Activated CD8-positive, alpha-beta T cell treated with anti-CD3 and anti-CD28 coated beads, Interleukin-2, amount 10 ng/mL, durations not matched to agents 7 days and 5 days (primary cell): ENCODE measurements at regions of chr1 and their contacts with region 1.

Region 1: GRCh38 chr1:206583707-206584648 is 28.3 kb downstream of the EIF2D start:
- DNase-seq: peak; percentile 90
- ATAC-seq: peak; percentile 18
- H3K4me3 Mint-ChIP-seq: peak overlapping the region; percentile 54
- H3K27ac Mint-ChIP-seq: peak overlapping the region; percentile 91
- H3K4me1 Mint-ChIP-seq: peaks cover 92% of the 10 kb centered on the region
- H3K27me3 Mint-ChIP-seq: no peaks in the 10 kb centered on the region

Region 2: DNA sequence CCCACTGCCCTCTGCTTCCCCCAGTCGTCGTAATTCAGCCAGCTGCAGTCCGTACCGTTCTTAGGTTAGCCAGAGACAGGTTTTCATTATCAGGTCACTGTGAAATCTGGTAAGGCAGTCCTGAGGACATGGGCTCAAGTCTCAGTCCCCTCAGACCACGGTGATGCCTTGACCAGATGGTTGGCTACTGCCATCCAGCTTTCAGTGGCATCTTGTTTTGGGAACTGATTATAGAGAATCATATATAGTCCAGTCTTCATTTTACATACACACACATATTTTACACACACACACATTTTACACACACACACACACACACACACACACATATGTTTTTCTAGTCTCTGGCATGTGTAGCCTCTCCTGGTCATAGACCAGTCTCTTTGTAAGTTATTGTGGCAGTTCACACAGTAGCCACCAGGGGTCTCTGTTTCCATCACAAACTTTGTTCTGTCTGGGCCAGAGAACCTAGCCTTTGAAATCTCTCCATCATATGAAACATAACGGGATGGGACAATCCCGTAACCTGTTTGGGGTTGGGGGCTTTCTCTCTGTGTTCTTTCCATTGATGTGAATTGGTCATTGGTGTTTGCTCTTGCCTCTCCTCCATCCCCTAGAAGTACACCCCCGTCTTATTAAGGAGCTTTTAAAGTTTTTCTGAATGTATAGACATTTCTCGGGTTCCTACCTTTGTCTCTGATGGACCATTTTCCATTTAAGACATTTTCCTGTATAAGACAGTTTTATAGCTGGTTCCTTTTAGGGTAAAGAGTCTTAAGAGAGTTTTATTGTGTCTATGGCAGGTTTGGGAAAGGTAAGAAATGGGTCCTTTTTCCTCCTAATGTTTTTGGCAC is 122.1 kb before region 1 on chr1:
- CTCF ChIA-PET with region 1: interaction called, 14 read pairs
- POLR2A ChIA-PET with region 1: no interaction called
- DNase-seq: peak; percentile 88
- ATAC-seq: peak; percentile 73
- H3K4me3 Mint-ChIP-seq: no peak overlapping the region
- H3K27ac Mint-ChIP-seq: no peak overlapping the region
- H3K4me1 Mint-ChIP-seq: peaks cover 43% of the 10 kb centered on the region
- H3K27me3 Mint-ChIP-seq: no peaks in the 10 kb centered on the region

Region 3: DNA sequence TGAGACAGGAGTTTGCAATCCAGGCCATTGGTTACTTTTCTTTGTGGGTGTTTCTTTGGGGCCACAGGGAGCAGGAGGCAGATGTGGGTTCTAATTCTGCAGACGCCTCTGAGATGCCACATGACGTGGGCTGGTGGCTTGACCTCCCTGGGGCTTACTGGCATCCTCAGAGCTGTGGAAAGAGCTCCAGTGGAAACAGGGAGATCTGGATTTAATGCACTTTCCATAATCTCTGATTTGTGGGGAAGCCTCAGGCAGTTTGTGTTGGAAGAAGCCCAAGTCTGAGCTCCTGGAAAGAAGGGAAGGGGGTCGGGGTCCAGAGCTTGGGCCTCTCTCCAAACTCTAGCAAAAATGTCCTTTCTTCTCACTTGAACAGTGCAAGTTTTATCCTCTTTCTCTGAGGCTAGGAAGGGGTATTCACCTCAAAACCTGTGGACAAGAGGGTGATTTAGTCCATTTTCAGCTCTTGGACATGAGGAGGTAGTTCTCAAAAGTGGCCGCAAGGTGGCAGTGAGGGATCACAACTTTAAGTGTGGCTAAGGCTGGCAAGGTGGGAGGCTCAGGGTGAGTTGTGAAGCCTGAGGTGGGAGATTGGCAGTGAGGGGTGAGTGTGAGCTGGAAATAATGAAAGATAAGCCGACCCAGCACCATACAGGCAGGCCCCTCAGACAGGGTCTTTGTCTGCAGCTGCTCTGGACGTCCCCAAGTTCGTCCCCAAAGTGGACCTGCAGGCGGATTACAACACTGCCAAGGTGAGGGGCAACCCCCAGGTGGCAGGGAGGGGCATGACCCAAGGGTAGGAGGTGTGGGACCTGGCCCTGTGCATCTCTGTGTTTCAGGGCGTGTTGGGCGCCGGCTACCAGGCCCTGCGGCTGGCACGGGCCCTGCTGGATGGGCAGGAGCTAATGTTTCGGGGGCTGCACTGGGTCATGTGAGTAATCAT is 104.5 kb before region 1 on chr1:
- CTCF ChIA-PET with region 1: interaction called, 16 read pairs
- POLR2A ChIA-PET with region 1: no interaction called
- DNase-seq: peak; percentile 80
- ATAC-seq: peak; percentile 73
- H3K4me3 Mint-ChIP-seq: no peak overlapping the region
- H3K27ac Mint-ChIP-seq: peak overlapping the region; percentile 55
- H3K4me1 Mint-ChIP-seq: peaks cover 18% of the 10 kb centered on the region
- H3K27me3 Mint-ChIP-seq: no peaks in the 10 kb centered on the region

Region 4: DNA sequence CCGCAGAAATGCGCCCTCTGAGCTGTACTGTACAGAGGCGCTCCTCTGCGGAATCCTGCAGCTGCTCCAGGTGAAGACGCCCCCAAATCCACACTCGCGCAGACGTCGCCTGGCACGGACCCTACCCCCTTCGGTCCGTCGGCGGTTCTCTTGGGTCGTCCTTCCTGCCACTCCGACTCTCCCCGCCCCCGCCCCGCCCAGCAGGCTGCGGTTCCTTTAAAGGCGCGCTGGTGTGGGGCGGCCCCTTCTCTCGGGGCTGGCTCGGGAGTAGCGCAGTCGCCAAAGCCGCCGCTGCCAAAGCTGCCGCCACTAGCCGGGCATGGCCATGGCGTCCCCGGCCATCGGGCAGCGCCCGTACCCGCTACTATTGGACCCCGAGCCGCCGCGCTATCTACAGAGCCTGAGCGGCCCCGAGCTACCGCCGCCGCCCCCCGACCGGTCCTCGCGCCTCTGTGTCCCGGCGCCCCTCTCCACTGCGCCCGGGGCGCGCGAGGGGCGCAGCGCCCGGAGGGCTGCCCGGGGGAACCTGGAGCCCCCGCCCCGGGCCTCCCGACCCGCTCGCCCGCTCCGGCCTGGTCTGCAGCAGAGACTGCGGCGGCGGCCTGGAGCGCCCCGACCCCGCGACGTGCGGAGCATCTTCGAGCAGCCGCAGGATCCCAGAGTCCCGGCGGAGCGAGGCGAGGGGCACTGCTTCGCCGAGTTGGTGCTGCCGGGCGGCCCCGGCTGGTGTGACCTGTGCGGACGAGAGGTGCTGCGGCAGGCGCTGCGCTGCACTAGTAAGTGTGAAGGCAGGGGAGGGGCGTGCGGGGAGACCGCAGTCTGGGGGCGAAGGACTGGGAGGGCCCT is 76.5 kb before region 1 on chr1 and contains the start of gene RASSF5:
- CTCF ChIA-PET with region 1: interaction called, 15 read pairs
- POLR2A ChIA-PET with region 1: interaction called, 3 read pairs
- DNase-seq: peak; percentile 87
- ATAC-seq: peak; percentile 90
- H3K4me3 Mint-ChIP-seq: peak within 1 kb of the TSS; percentile 73
- H3K27ac Mint-ChIP-seq: no peak within 1 kb of the TSS
- H3K4me1 Mint-ChIP-seq: peaks cover 45% of the 10 kb centered on the region
- H3K27me3 Mint-ChIP-seq: peaks cover 25% of the 10 kb centered on the region
- total RNA-seq, gene RASSF5: 192 to 195 TPM

Region 5: DNA sequence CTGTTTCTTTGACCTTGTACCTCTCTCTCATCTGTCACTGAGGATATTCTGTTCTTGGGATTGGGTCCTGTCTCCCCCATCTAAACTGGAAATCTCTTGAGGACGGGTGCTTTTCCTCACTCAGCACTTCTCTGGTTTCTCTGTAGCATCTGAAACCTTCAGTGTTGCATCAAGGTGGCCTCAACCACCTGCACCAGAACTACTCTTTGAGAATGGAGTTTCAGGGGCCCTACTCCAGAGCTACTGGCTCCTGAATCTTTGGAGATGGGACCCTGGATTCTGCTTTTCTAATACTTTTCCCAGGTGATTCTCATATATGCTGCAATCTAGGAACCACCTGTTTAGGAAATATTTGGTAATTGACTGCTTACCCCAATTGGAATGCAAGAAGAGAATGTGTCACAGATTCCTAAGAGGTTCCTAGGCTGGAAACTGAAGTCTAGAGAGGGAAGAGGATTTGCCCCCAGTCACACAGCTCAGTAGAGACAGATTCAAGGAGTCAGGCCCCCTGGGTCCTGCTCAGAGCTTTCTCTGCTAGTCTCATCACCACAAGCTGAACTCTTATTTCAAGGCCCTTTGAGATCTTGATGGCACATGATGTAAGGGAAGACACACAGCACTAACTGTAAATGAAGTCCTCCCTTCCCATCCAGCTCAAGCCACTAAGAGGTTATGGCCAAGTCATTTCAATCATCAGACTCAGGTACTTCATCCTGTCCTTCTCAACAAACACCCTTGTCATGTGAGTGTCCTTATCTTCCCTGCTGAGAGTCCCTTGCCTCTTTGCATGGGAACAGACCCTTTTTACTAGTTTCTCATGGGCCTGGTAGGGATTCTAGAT is 20.4 kb before region 1 on chr1:
- CTCF ChIA-PET with region 1: interaction called, 728 read pairs
- POLR2A ChIA-PET with region 1: interaction called, 276 read pairs
- DNase-seq: no peak
- ATAC-seq: peak; percentile 14
- H3K4me3 Mint-ChIP-seq: peak overlapping the region; percentile 62
- H3K27ac Mint-ChIP-seq: peak overlapping the region; percentile 90
- H3K4me1 Mint-ChIP-seq: peaks cover 88% of the 10 kb centered on the region
- H3K27me3 Mint-ChIP-seq: no peaks in the 10 kb centered on the region